Right ventricle myocardium superior (tissue), 1 donor: ENCODE measurements at regions of chr2 and their contacts with region 1.

Region 1: GRCh38 chr2:119753041-119753929 is 6.4 kb upstream of the PTPN4 start:
- DNase-seq: no peak
- ATAC-seq: peak; percentile 80

Region 2: GRCh38 chr2:119608553-119608952 is 144.7 kb before region 1 on chr2:
- intact Hi-C with region 1: no loop called
- DNase-seq: no peak
- ATAC-seq: no peak

Region 3: DNA sequence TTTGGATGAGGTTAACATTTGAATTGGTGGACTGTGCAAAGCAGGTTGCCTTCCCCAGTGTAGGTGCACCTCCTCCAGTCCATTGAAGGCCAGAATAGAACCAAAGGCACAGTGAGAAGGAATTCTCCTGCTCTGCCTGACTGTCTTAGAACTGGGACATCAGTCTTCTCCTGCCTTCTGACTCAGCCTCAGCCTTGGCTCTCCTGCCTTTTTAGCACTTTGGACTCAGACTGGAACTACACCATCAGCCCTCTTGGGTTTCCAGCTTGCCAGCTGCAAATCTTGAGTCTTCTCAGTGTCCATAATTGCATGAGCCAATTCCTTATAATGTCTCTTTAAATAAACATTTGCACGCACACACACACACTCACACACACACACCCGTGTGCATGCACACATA is 82.3 kb before region 1 on chr2:
- intact Hi-C with region 1: no loop called
- DNase-seq: no peak
- ATAC-seq: no peak

Region 4: DNA sequence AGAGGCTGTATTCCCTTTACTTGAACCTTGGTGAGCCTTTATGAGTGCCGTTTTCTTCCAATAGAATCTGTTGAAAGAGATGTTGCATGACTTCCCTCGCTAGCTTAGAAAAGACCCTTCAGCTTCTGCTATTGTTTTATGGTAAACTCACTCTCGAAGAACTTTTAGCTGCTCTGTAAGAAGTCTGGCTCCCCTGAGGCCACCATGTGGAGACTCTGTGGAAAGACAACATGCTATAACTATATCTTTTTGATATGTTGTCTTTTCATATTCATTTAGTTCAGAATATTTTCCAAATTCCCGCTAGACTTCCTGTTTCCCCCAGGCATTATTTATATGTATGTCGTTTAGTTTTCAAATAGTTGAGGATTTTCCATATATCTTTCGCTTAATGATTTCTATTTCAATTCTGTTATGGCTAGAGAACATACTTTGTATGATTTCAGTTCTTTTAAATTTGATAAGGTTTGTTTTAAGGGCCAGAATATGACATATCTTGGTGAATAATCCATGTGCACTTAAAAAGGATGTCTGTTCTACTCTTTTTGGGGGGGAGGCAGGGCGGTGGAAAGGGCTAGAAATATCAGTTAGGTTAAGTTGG is 70.5 kb after region 1 on chr2:
- intact Hi-C with region 1: loop called (anchors 5 kb)
- DNase-seq: no peak
- ATAC-seq: peak; percentile 76

Region 5: GRCh38 chr2:120174963-120175581 is 421.8 kb after region 1 on chr2:
- intact Hi-C with region 1: loop called (anchors 5 kb)
- DNase-seq: no peak
- ATAC-seq: peak; percentile 61